ENCODE measurements at regions of chr3 and their contacts with region 1.

Region 1: DNA sequence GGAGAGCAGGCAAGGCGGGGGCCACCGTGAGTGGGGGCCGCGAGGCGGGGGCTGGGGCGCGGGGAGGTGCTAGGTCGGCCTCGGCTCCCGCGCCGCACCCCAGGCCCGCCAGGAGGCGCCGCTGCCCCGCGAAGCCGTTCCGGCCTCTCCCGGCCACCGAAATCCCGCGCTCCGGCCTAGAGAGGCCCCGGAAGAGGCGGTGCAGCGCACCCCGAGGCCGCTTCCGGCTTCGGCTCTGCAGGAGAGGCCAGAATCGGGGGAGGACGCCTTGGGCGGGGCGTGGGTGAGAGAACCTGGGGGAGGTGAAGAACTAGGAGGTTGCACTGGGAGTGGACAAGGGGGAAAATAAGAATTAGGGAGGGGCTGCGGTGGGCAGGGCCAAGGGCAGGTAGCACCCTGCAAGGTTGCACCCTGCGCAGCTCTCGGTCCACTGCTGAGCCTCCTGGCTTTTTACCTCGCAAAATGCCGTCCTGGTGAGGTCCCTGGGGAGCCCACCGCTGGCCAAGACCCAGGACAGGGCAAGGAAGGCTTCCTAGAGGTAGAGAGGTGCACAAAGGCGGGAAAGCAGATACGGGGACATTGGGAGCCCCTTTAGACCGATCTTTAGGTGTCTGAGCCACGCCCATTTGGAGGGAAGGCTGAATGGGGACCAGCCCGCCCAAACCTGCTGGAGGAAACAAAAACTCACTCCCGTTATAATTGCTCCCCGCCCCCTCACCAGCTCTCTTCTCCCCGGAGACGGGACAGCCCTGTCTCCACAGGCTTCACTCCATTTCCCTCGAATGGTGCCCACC is 8.4 kb upstream of the GNAI2 start:
- DNase-seq: peak; percentile 93
- ATAC-seq: peak; percentile 81
- H3K4me3 Mint-ChIP-seq: peak overlapping the region; percentile 94
- H3K27ac Mint-ChIP-seq: peak overlapping the region; percentile 88
- H3K4me1 Mint-ChIP-seq: peaks cover 40% of the 10 kb centered on the region
- H3K27me3 Mint-ChIP-seq: peaks cover 5% of the 10 kb centered on the region
- CTCF ChIP-seq: peak; percentile 92

Region 2: DNA sequence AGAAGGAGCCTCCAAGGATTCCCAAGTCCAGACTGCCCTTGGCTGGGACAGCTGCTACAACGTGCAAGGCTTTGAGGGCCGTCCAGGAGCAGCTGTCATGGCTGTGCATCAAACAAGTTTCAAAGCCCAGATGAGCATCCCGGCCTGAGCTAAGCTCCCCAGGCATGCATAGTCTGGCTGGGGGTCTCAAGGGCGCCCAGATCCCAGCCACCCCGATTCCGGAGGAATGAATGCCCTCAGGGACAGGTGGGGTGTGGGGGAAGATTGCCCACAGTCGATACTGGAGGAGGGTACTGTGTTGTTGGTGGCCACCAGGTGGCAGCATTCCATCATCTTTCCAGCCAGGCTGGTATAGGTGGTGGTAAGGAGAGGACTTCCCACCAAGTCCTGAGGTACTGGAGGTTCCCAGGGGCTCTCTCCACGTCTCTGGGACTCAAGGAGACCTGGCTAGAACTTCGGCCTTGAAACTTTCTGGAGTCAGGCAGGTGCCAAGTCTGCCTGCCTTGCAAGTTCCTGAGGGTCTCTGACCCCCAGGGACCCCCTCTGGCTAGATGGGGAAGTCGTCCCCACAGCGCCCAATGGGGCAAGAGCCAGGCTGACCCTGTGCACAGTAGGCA is 106.1 kb before region 1 on chr3:
- CTCF ChIA-PET with region 1: interaction called, 3 read pairs
- POLR2A ChIA-PET with region 1: no interaction called
- intact Hi-C with region 1: loop called (anchors 1 kb)
- DNase-seq: peak; percentile 61
- ATAC-seq: peak; percentile 88
- H3K4me3 Mint-ChIP-seq: no peak overlapping the region
- H3K27ac Mint-ChIP-seq: no peak overlapping the region
- H3K4me1 Mint-ChIP-seq: no peaks in the 10 kb centered on the region
- H3K27me3 Mint-ChIP-seq: no peaks in the 10 kb centered on the region
- CTCF ChIP-seq: peak; percentile 21

Region 3: DNA sequence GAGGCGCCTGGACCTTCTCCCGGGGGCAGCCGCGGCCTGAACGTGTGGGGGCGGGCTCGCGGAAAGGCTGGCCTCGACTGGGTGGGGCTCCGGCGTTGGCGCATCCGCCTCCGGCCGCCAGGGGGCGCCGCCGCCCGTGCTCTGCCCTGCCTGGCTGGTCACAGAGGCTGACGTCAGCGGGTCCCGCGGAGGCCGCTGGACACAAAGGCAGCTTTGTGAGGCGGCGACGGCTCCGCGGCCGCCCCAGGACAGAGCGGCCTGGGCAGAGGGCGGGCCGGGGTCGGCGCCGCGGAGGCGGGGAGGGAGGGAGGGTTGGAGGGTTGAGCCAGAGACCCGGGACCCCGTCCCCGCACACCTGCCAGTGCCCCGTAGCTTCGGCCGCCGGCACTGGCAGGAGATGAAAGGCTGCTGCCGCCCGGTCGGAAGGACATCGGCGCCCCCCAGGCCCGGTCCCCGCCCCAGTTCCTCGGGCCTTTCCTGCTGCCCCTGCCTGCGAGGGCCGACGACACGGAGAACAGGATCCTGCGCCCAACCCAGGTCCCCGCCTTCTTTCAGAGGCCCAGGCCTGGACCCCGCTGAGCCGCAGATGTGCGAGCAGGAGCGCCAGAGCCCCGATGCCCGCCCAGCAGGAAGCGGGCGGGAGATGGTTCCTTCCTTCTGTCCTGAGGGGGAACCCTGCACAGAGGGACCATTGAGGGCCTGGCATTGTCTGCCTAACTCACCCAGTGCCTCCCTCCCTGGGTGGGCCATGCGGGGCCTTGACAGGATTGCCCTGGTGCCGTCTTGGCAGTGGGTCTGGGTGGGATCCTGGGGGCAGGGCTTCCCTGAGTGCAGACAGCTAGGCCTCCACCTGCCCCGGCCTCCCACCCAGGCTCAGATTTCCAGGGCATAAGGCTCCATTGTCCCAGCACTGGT is 32.7 kb after region 1 on chr3:
- CTCF ChIA-PET with region 1: interaction called, 9 read pairs
- POLR2A ChIA-PET with region 1: interaction called, 4 read pairs
- intact Hi-C with region 1: loop called (anchors 1 kb)
- DNase-seq: peak; percentile 91
- ATAC-seq: peak; percentile 93
- H3K4me3 Mint-ChIP-seq: peak overlapping the region; percentile 73
- H3K27ac Mint-ChIP-seq: peak overlapping the region; percentile 50
- H3K4me1 Mint-ChIP-seq: peaks cover 7% of the 10 kb centered on the region
- H3K27me3 Mint-ChIP-seq: no peaks in the 10 kb centered on the region
- CTCF ChIP-seq: no peak

Region 4: DNA sequence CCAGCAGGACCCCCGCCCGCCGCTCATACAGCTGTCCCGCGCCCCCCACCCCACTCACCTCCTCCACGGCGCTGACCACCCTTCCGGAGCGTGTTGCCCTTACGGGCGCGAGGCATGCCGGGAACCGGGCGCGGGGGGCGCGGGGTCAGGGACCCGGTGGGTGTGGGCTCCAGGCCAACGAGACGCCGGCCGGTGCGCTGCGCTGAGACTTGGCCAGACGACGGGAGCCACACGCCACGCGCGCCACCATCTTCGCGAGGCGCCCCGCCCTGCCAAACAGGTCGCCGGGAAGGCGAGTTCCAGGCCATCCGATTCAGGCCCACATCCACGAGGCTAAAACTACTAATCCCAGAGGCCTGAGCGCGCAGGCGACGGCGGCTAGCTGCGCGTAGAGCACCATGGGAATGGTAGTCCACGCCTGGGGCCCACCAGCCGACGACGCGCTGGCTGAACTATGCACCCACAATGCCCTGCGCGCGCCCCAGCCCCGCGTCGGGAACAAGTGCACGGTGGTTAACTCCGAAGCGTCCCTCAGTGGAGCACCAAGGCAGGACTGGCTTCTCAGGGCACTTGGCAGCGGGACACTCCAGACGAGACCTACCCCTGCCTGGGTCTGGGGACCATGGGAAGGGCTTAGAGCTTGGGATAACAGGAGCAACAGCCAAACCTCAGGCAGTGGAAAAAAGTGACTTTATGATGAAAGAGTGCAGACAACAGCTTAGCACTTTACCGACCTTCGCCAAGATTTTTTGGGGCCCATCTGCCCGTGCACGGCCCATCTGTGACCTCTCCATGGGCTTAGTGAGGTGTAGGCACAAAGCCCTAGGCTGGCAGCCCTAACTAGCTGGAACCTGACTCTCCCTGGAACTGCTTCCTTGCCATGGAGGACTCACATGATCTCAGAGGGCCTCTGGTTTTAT is 64.8 kb after region 1 on chr3 and contains the start of gene IFRD2:
- CTCF ChIA-PET with region 1: interaction called, 4 read pairs
- POLR2A ChIA-PET with region 1: interaction called, 6 read pairs
- intact Hi-C with region 1: loop called (anchors 1 kb)
- DNase-seq: peak; percentile 87
- ATAC-seq: peak; percentile 99
- H3K4me3 Mint-ChIP-seq: peak within 1 kb of the TSS; percentile 86
- H3K27ac Mint-ChIP-seq: peak within 1 kb of the TSS; percentile 95
- H3K4me1 Mint-ChIP-seq: peaks cover 20% of the 10 kb centered on the region
- H3K27me3 Mint-ChIP-seq: no peaks in the 10 kb centered on the region
- CTCF ChIP-seq: no peak
- total RNA-seq, gene IFRD2: 92.2 and 105 TPM in 2 replicates

Measured in activated B cell treated with CpG ODN at 0.5 μM for 24 hours (primary cell).